ENCODE measurements at regions of chr17 and their contacts with region 1.

Region 1: GRCh38 chr17:40559954-40560591 is 5.2 kb downstream of the CCR7 start:
- DNase-seq: peak; percentile 90 to 94
- H3K4me3 ChIP-seq: no peak overlapping the region
- H3K4me3 Mint-ChIP-seq: peak overlapping the region; percentile 30
- H3K27ac Mint-ChIP-seq: no peak overlapping the region
- H3K4me1 ChIP-seq: peaks cover 8% of the 10 kb centered on the region; the same call in 1 of the 2 replicates
- H3K4me1 Mint-ChIP-seq: peaks cover 6% of the 10 kb centered on the region
- H3K27me3 ChIP-seq: no peaks in the 10 kb centered on the region
- H3K27me3 Mint-ChIP-seq: peaks cover 6% of the 10 kb centered on the region
- CTCF ChIP-seq: peak; percentile 97 to 99

Region 2: DNA sequence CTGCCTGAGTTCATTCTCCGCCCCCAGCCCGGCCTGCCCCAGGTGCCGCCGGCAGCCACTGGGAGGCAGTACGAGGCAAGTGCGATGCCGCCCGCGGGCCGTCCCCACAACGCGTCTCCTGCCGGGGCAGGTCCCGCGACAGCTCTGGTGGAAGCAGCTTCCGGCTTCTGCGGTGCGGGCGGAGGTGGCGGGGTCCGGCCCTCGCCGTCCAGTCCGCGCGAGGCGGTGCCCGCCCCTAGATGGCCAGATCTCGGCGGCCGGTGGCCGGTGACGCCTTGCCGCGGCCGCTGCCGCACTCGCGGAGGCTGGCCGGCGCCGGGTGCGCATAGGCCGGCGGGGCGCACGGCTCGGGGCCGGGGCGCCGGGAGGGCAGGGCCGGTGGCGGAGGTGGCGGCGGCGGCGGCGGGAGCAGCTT is 197.4 kb before region 1 on chr17:
- CTCF ChIA-PET with region 1: interaction called, 11 read pairs
- POLR2A ChIA-PET with region 1: no interaction called
- intact Hi-C with region 1: loop called (anchors 2 kb)
- DNase-seq: peak; percentile 89 to 94
- H3K4me3 ChIP-seq: peak overlapping the region; percentile 94
- H3K4me3 Mint-ChIP-seq: peak overlapping the region; percentile 69
- H3K27ac Mint-ChIP-seq: peak overlapping the region; percentile 11
- H3K4me1 ChIP-seq: peaks cover 5% of the 10 kb centered on the region; the same call in 1 of the 2 replicates
- H3K4me1 Mint-ChIP-seq: peaks cover 6% of the 10 kb centered on the region
- H3K27me3 ChIP-seq: no peaks in the 10 kb centered on the region
- H3K27me3 Mint-ChIP-seq: no peaks in the 10 kb centered on the region
- CTCF ChIP-seq: peak; percentile 62 to 93

Region 3: GRCh38 chr17:40443583-40444327 is 116.3 kb before region 1 on chr17:
- CTCF ChIA-PET with region 1: interaction called, 23 read pairs
- POLR2A ChIA-PET with region 1: no interaction called
- intact Hi-C with region 1: loop called (anchors 1 kb)
- DNase-seq: peak; percentile 81 to 89
- H3K4me3 ChIP-seq: peak overlapping the region; percentile 61
- H3K4me3 Mint-ChIP-seq: peak overlapping the region; percentile 26
- H3K27ac Mint-ChIP-seq: no peak overlapping the region
- H3K4me1 ChIP-seq: peaks cover 14% of the 10 kb centered on the region
- H3K4me1 Mint-ChIP-seq: peaks cover 20% of the 10 kb centered on the region
- H3K27me3 ChIP-seq: no peaks in the 10 kb centered on the region
- H3K27me3 Mint-ChIP-seq: no peaks in the 10 kb centered on the region
- CTCF ChIP-seq: peak; percentile 40 to 78

Region 4: GRCh38 chr17:40474419-40475002 is 85.6 kb before region 1 on chr17:
- CTCF ChIA-PET with region 1: interaction called, 19 read pairs
- POLR2A ChIA-PET with region 1: no interaction called
- intact Hi-C with region 1: no loop called
- DNase-seq: no peak
- H3K4me3 ChIP-seq: no peak overlapping the region
- H3K4me3 Mint-ChIP-seq: no peak overlapping the region
- H3K27ac Mint-ChIP-seq: no peak overlapping the region
- H3K4me1 ChIP-seq: no peaks in the 10 kb centered on the region
- H3K4me1 Mint-ChIP-seq: no peaks in the 10 kb centered on the region
- H3K27me3 ChIP-seq: no peaks in the 10 kb centered on the region
- H3K27me3 Mint-ChIP-seq: no peaks in the 10 kb centered on the region
- CTCF ChIP-seq: no peak

Region 5: GRCh38 chr17:40536295-40537171 is 23.5 kb before region 1 on chr17:
- CTCF ChIA-PET with region 1: interaction called, 99 read pairs
- POLR2A ChIA-PET with region 1: no interaction called
- intact Hi-C with region 1: loop called (anchors 1 kb)
- DNase-seq: no peak
- H3K4me3 ChIP-seq: no peak overlapping the region
- H3K4me3 Mint-ChIP-seq: no peak overlapping the region
- H3K27ac Mint-ChIP-seq: no peak overlapping the region
- H3K4me1 ChIP-seq: 0 out of 2 replicates have a peak, but pooled peaks cover 9% of the 10 kb centered on the region
- H3K4me1 Mint-ChIP-seq: no peaks in the 10 kb centered on the region
- H3K27me3 ChIP-seq: no peaks in the 10 kb centered on the region
- H3K27me3 Mint-ChIP-seq: no peaks in the 10 kb centered on the region
- CTCF ChIP-seq: no peak

Region 6: DNA sequence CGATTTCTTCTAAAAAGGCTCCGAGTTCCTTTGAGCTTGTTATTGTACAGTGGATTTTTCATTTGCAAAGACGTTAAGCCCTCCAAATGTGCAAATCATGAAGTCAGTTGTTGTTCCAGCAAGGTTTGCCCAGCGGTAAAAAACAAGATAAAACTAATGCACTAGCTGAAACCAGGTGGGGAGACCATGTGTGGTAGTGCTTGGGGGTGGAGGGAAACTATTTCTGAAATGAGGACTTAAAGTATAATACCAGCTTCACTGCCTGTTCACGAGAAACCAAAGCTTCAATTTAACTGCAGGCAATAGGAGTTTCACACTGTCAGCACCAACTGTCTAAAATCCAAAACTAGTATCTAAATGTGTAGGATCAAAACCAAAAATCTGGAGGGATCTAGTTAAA is 65.2 kb after region 1 on chr17:
- CTCF ChIA-PET with region 1: no interaction called
- POLR2A ChIA-PET with region 1: no interaction called
- intact Hi-C with region 1: no loop called
- DNase-seq: no peak
- H3K4me3 ChIP-seq: no peak overlapping the region
- H3K4me3 Mint-ChIP-seq: no peak overlapping the region
- H3K27ac Mint-ChIP-seq: no peak overlapping the region
- H3K4me1 ChIP-seq: no peaks in the 10 kb centered on the region
- H3K4me1 Mint-ChIP-seq: peaks cover under 1% of the 10 kb centered on the region
- H3K27me3 ChIP-seq: no peaks in the 10 kb centered on the region
- H3K27me3 Mint-ChIP-seq: no peaks in the 10 kb centered on the region
- CTCF ChIP-seq: no peak

Measured in Caco-2 (cell line).